OCI-LY7 (cell line): ENCODE measurements at regions of chr16 and their contacts with region 1.

Region 1: GRCh38 chr16:56303066-56303715 is 111.9 kb downstream of the GNAO1 start:
- DNase-seq: no peak
- H3K4me3 ChIP-seq: no peak overlapping the region
- H3K27ac ChIP-seq: no peak overlapping the region
- H3K4me1 ChIP-seq: no peaks in the 10 kb centered on the region
- CTCF ChIP-seq: no peak

Region 2: DNA sequence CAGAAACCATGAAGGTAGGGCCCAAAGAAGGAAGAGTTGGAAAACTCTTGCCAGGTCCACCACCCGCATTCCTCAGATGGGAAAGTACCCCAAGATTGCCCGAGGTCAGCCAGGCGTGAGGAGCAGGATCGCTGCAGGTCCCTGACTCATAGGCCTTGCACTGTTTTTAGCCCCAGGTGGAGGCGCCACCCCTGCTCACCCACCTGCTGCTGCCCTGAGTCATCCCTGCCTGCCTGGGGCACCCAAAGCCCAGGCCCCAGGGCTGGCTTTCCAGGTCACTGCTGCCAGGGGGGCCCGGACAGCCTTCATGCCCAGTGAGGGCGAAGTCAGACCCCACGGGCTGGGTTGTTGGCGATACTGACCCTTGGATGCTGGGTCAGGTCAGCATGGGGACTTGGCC is 21.2 kb after region 1 on chr16:
- CTCF ChIA-PET with region 1: interaction called, 12 read pairs
- POLR2A ChIA-PET with region 1: interaction called, 4 read pairs
- intact Hi-C with region 1: no loop called
- DNase-seq: no peak
- H3K4me3 ChIP-seq: no peak overlapping the region
- H3K27ac ChIP-seq: no peak overlapping the region
- H3K4me1 ChIP-seq: no peaks in the 10 kb centered on the region
- CTCF ChIP-seq: no peak